Sigmoid colon (tissue), 7 donors: ENCODE measurements at regions of chr9 and their contacts with region 1.

Region 1: GRCh38 chr9:114033397-114034103 is 44.5 kb downstream of the AMBP start:
- DNase-seq: peak; percentile 59
- H3K4me3 ChIP-seq: no peak overlapping the region
- H3K27ac ChIP-seq: no peak overlapping the region
- H3K4me1 ChIP-seq: no peaks in the 10 kb centered on the region
- H3K27me3 ChIP-seq: no peaks in the 10 kb centered on the region
- CTCF ChIP-seq: peak in 3 of 4 experiments; percentile 18 to 46 (median 41)
- EP300 ChIP-seq: no peak
- POLR2A ChIP-seq: no peak

Region 2: GRCh38 chr9:113682297-113682771 is 351.2 kb before region 1 on chr9:
- intact Hi-C with region 1: loop called (anchors 10 kb)
- DNase-seq: peak; percentile 81
- H3K4me3 ChIP-seq: no peak overlapping the region
- H3K27ac ChIP-seq: no peak overlapping the region
- H3K4me1 ChIP-seq: peaks cover 0 to under 1% (median 0%) of the 10 kb centered on the region in 4 donors
- H3K27me3 ChIP-seq: peaks cover 0 to 5% (median 3%) of the 10 kb centered on the region in 3 donors
- CTCF ChIP-seq: peak; percentile 59 to 89 (median 70)
- EP300 ChIP-seq: no peak
- POLR2A ChIP-seq: no peak

Region 3: GRCh38 chr9:114538241-114538640 is 504.7 kb after region 1 on chr9:
- intact Hi-C with region 1: no loop called
- DNase-seq: no peak
- H3K4me3 ChIP-seq: no peak overlapping the region
- H3K27ac ChIP-seq: no peak overlapping the region
- H3K4me1 ChIP-seq: no peaks in the 10 kb centered on the region
- H3K27me3 ChIP-seq: no peaks in the 10 kb centered on the region
- CTCF ChIP-seq: no peak
- EP300 ChIP-seq: no peak
- POLR2A ChIP-seq: no peak